MCF 10A (cell line): ENCODE measurements at regions of chr2 and their contacts with region 1.

Region 1: GRCh38 chr2:231701456-231702373 is 6.6 kb upstream of the PTMA start:
- DNase-seq: peak; percentile 98
- H3K4me3 Mint-ChIP-seq: peak overlapping the region; percentile 58
- H3K27ac Mint-ChIP-seq: peak overlapping the region; percentile 71
- H3K4me1 Mint-ChIP-seq: peaks cover 11% of the 10 kb centered on the region
- H3K27me3 Mint-ChIP-seq: no peaks in the 10 kb centered on the region
- CTCF ChIP-seq: no peak

Region 2: DNA sequence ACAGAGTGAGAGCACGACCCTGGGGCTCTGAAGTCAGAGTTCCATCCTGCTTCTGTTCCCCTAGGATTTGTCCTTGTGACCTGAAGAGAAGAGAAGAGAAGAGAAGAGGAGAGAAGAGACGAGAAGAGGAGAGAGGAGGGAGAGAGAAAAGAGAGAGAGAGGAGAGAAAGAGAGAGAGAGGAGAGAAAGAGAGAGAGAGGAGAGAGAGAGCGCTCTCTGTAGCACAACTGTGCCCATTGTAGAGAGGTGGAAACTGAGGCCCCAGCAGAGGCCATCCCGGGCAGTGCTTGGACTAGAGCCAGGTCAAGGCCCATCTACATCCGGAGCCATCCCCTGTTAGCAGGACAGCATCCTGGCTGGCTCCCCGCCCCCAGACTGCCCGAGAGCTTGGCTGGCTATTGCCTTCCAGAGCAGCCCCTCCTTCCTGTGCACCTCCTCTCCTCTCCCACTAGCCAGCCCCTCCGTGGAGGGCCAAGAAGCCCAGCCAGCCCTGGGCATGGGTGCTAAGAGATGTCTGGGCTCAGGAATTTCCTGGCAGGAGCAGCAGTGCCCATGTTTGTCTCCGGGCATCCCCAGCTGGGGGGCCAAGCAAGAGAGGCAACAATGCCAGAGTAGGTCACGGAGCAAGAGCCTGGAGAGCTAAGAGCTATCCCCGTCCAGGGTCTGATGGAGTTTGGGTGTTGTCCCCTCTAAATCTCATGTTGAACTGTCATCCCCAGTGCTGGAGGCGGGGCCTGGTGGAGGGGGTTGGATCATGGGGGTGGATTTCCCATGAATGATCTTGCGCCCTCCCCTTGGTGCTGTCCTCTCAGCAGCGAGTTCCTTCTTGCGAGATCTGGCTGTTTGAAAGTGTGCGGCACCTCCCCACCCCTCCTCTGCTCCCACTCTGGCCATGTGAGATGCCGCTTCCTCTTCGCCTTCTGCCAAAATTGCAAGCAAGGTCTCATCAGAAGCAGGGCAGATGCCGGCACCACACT is 758.5 kb before region 1 on chr2:
- CTCF ChIA-PET with region 1: no interaction called
- POLR2A ChIA-PET with region 1: no interaction called
- intact Hi-C with region 1: no loop called
- DNase-seq: no peak
- H3K4me3 Mint-ChIP-seq: no peak overlapping the region
- H3K27ac Mint-ChIP-seq: no peak overlapping the region
- H3K4me1 Mint-ChIP-seq: peaks cover 5% of the 10 kb centered on the region
- H3K27me3 Mint-ChIP-seq: no peaks in the 10 kb centered on the region
- CTCF ChIP-seq: no peak

Region 3: DNA sequence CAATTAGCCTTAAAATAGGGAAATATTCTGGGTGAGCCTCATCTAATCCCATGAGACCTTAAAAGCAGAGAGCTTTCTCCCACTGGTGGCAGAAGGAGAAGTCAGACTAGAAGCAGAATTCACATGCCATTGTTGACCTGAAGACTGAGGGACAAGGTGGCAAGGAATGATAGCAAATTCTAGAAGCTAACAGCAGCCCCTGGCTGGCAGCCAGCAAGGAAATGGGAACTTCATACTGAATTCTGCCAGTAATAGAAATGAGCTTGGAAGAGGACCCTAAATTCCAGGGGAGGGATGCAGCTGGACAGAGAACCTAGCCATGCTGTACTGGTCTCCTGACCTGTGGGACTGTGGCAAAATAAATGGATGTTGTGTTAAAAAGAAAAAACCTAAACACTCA is 286.7 kb before region 1 on chr2:
- CTCF ChIA-PET with region 1: no interaction called
- POLR2A ChIA-PET with region 1: no interaction called
- intact Hi-C with region 1: no loop called
- DNase-seq: no peak
- H3K4me3 Mint-ChIP-seq: no peak overlapping the region
- H3K27ac Mint-ChIP-seq: no peak overlapping the region
- H3K4me1 Mint-ChIP-seq: no peaks in the 10 kb centered on the region
- H3K27me3 Mint-ChIP-seq: peaks cover 15% of the 10 kb centered on the region
- CTCF ChIP-seq: no peak

Region 4: DNA sequence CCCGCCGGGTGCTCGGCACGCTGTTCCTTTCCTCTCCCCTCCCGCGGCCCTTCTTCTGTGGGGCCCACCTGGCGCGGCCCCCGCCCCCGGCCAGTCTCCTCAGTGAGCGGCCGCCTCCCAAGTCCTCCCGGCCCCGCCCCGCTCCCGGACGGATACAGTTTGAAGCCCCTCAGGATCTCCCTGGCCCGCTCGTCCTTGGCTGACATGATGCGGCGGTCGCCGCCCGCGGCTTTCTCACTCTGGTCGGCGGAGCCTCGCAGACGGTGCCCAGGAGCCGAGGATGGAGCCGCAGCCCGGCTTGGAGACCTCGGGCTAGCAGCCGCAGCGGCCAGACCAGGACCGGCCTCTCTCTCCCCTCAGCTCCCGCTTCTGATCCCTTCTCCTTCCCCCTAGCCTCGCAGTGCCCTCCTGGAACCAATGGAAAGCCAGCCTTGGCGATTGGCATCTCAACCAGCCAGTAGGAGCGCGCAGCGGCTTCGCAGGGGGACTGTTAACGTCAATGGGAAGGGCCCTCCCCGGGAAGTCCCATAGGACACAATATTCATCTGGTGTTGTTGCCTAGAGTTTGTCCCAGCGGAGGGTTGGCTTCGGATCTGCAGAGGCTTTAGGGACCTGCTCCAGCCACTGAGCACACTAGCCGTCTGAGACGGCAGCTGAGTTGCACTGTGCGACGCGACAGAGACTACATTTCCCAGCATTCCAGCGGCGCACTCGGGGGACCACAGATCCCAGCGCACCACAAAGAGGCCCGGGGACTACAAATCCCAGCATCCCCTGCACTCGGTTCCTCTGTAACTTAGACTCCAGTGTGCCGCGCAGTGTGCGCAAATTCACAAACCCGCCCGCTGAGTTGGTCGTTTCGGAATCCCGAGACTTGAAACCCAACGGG is 79.4 kb after region 1 on chr2 and contains the start of gene PDE6D:
- CTCF ChIA-PET with region 1: no interaction called
- POLR2A ChIA-PET with region 1: interaction called, 12 read pairs
- intact Hi-C with region 1: no loop called
- DNase-seq: peak; percentile 99
- H3K4me3 Mint-ChIP-seq: peak within 1 kb of the TSS; percentile 98
- H3K27ac Mint-ChIP-seq: peak within 1 kb of the TSS; percentile 95
- H3K4me1 Mint-ChIP-seq: peaks cover 30% of the 10 kb centered on the region
- H3K27me3 Mint-ChIP-seq: no peaks in the 10 kb centered on the region
- CTCF ChIP-seq: no peak
- total RNA-seq, gene PDE6D: 13.2 and 20.6 TPM in 2 replicates

Region 5: GRCh38 chr2:231866450-231866849 is 164.7 kb after region 1 on chr2:
- CTCF ChIA-PET with region 1: no interaction called
- POLR2A ChIA-PET with region 1: no interaction called
- intact Hi-C with region 1: no loop called
- DNase-seq: no peak
- H3K4me3 Mint-ChIP-seq: no peak overlapping the region
- H3K27ac Mint-ChIP-seq: no peak overlapping the region
- H3K4me1 Mint-ChIP-seq: no peaks in the 10 kb centered on the region
- H3K27me3 Mint-ChIP-seq: peaks cover 32% of the 10 kb centered on the region
- CTCF ChIP-seq: no peak